HCT116 (cell line): ENCODE measurements at regions of chr17 and their contacts with region 1.

Region 1: DNA sequence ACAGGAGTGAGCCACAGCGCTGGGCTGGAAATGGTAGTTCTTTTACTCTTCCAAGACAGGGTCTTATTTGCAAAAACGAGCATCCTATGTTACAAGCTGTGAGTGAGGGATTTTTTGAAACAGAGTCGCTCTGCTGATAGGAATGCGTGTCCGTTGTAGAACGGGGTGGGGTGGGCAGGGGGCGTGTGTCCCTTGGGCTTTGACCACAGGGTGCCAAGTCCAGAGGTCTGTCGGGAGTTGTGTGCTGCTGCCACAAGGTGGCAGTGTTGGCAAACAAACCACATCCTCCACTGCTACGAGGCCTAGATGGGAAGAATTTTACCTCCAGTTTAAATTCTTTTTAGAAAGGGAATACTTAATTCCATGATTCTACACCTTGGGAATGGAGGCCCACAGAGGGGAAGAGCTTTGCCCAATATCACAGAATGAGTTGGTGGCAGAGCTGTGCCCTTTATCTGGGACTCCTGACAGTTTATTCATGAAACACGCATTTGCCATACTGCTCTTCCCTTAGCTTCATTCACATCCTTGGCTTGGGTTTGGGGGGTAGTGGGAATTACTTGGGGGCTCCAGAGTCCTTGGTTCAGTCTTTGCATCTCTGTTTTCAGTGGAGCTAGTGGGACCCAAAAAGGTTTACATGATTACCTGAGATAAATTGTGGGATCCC is 30.6 kb upstream of the ETV4 start:
- DNase-seq: peak; percentile 69
- ATAC-seq: peak; percentile 95
- H3K4me3 ChIP-seq: no peak overlapping the region
- H3K27ac ChIP-seq: no peak overlapping the region
- H3K4me1 ChIP-seq: peaks cover 0 to 24% of the 10 kb centered on the region in 2 experiments; a peak in 2 of 4 replicates
- H3K27me3 ChIP-seq: no peaks in the 10 kb centered on the region
- CTCF ChIP-seq: peak; percentile 79 to 96 (median 81)
- POLR2A ChIP-seq: no peak
- RAD21 ChIP-seq: peak; percentile 98

Region 2: GRCh38 chr17:43449470-43450248 is 127.0 kb before region 1 on chr17:
- CTCF ChIA-PET with region 1: no interaction called
- POLR2A ChIA-PET with region 1: no interaction called
- RAD21 ChIA-PET with region 1: no interaction called
- intact Hi-C with region 1: no loop called
- DNase-seq: no peak
- ATAC-seq: no peak
- H3K4me3 ChIP-seq: no peak overlapping the region
- H3K27ac ChIP-seq: no peak overlapping the region
- H3K4me1 ChIP-seq: no peaks in the 10 kb centered on the region; a peak in 1 of 4 replicates
- H3K27me3 ChIP-seq: no peaks in the 10 kb centered on the region
- CTCF ChIP-seq: no peak
- POLR2A ChIP-seq: no peak
- RAD21 ChIP-seq: no peak

Region 3: DNA sequence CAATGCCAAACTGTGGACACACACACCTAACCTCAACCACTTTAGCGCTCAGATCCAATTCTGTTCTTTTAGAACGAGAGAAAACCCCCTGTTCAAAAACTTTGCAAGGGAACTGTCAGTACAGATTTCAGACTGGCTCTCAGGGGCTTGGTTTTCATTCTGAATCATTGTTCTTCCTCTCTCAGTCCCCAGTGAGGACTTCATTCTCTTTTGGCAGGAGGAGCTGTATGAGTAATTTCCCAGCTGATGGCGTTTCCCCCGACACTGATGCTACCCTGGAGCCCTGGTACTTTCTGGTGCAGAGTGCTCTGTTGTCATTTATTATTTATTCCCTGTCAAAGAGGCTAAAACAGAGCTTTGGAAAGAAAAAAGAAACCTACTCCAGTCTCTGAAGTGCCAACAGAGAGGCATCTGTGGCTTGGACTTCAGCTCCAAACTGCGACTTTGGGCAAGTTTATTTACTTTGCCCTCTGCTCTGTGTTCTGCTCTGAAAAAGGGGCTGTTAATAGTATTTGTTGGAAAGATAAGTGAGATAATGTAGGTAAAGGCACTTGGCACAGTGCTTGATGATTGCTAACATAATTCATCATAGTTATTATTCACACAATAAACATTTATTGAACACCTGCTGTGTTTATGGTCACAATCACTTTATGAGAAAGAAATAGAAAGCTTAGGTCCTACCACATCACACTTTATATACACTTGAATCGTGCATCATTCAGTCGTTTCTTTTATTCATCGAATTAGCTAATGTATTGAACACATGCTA is 58.9 kb before region 1 on chr17:
- CTCF ChIA-PET with region 1: no interaction called
- POLR2A ChIA-PET with region 1: no interaction called
- RAD21 ChIA-PET with region 1: no interaction called
- intact Hi-C with region 1: loop called (anchors 1 kb)
- DNase-seq: no peak
- ATAC-seq: no peak
- H3K4me3 ChIP-seq: no peak overlapping the region
- H3K27ac ChIP-seq: no peak overlapping the region
- H3K4me1 ChIP-seq: no peaks in the 10 kb centered on the region
- H3K27me3 ChIP-seq: no peaks in the 10 kb centered on the region
- CTCF ChIP-seq: no peak
- POLR2A ChIP-seq: no peak
- RAD21 ChIP-seq: no peak

Region 4: DNA sequence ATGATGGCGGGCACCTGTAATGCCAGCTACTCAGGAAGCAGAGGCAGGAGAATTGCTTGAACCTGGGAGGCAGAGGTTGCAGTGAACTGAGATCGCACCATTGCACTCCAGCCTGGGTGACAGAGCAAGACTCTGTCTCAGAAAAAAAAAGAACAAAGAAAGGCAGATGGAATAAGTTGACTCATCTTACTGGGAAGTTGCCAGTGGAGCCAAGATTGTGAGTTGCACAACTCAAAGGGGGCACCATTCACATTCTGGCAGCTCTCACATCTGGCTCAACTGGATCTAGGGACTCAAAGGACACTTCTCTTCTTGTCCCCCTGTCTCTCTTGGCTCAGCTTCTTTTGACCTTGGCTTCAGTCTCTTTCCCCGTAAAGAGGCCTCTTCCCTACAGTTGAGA is 23.1 kb after region 1 on chr17:
- CTCF ChIA-PET with region 1: no interaction called
- POLR2A ChIA-PET with region 1: no interaction called
- RAD21 ChIA-PET with region 1: no interaction called
- intact Hi-C with region 1: no loop called
- DNase-seq: no peak
- ATAC-seq: no peak
- H3K4me3 ChIP-seq: no peak overlapping the region
- H3K27ac ChIP-seq: no peak overlapping the region
- H3K4me1 ChIP-seq: peaks cover 0 to 13% of the 10 kb centered on the region in 2 experiments; a peak in 1 of 4 replicates
- H3K27me3 ChIP-seq: no peaks in the 10 kb centered on the region
- CTCF ChIP-seq: no peak
- POLR2A ChIP-seq: no peak
- RAD21 ChIP-seq: no peak

Region 5: GRCh38 chr17:43673516-43674323 is 97.0 kb after region 1 on chr17:
- CTCF ChIA-PET with region 1: interaction called, 10 read pairs
- POLR2A ChIA-PET with region 1: interaction called, 7 read pairs
- RAD21 ChIA-PET with region 1: interaction called, 14 to 26 read pairs
- intact Hi-C with region 1: loop called (anchors 1 kb)
- DNase-seq: peak; percentile 49
- ATAC-seq: peak; percentile 75
- H3K4me3 ChIP-seq: no peak overlapping the region
- H3K27ac ChIP-seq: no peak overlapping the region
- H3K4me1 ChIP-seq: peaks cover 0 to 16% of the 10 kb centered on the region in 2 experiments; a peak in 3 of 4 replicates
- H3K27me3 ChIP-seq: no peaks in the 10 kb centered on the region
- CTCF ChIP-seq: peak; percentile 90 to 96 (median 92)
- POLR2A ChIP-seq: no peak
- RAD21 ChIP-seq: peak; percentile 93

Region 6: DNA sequence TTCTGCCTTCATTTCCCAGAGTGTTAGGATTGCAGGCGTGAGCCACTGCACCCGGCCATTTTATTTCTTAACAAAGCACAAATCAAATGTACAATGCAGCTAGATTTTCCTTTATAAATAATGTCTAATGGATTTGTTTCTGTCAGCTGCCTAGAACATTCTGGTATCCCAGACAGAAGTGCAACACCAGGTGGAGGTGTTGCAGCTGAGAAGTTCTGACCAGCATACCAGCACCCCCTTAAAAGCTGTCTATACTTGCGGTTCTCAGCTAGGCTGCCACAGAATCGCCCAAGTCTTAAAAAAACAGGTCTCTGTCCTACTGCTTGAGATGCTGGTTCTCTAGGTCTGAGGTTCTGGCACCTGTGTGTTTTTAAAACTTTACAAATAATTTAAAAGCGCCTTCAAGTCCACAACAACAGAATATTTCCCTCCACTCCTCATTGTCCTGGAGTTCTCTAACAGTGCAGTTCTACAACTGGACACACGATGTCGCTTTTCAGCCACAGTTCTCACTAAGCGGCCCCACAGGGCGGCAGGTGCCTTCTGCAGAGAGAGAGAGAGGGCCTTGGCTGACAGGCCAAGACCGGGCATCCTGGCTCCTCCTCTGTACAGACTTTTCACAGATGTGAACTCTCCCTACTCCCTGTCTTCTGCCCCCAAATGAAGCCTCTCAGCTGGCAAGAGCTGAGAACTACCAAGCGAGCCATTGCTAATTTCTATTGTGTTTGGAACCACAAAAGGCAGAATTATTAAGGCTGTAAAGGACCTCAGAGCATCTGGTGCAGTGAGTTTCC is 117.6 kb after region 1 on chr17:
- CTCF ChIA-PET with region 1: interaction called, 13 read pairs
- POLR2A ChIA-PET with region 1: no interaction called
- RAD21 ChIA-PET with region 1: interaction called in 1 of 2 experiments, 7 read pairs
- intact Hi-C with region 1: no loop called
- DNase-seq: peak; percentile 78
- ATAC-seq: peak; percentile 94
- H3K4me3 ChIP-seq: no peak overlapping the region
- H3K27ac ChIP-seq: no peak overlapping the region
- H3K4me1 ChIP-seq: peaks cover 3 to 9% of the 10 kb centered on the region in 2 experiments; a peak in 3 of 4 replicates
- H3K27me3 ChIP-seq: no peaks in the 10 kb centered on the region
- CTCF ChIP-seq: peak; percentile 81 to 99 (median 92)
- POLR2A ChIP-seq: no peak
- RAD21 ChIP-seq: peak; percentile 98

Region 7: GRCh38 chr17:43760254-43760852 is 183.7 kb after region 1 on chr17:
- CTCF ChIA-PET with region 1: interaction called, 19 read pairs
- POLR2A ChIA-PET with region 1: no interaction called
- RAD21 ChIA-PET with region 1: interaction called in 1 of 2 experiments, 3 read pairs
- intact Hi-C with region 1: loop called (anchors 1 kb)
- DNase-seq: peak; percentile 93
- ATAC-seq: peak; percentile 98
- H3K4me3 ChIP-seq: no peak overlapping the region
- H3K27ac ChIP-seq: no peak overlapping the region
- H3K4me1 ChIP-seq: peaks cover 0 to 10% of the 10 kb centered on the region in 2 experiments; a peak in 2 of 4 replicates
- H3K27me3 ChIP-seq: no peaks in the 10 kb centered on the region
- CTCF ChIP-seq: peak; percentile 99 to 100 (median 100)
- POLR2A ChIP-seq: no peak
- RAD21 ChIP-seq: peak; percentile 100